ENCODE measurements at regions of chr14 and their contacts with region 1.

Region 1: GRCh38 chr14:76352639-76353281 is 23.2 kb upstream of the ESRRB start:
- DNase-seq: peak; percentile 4
- ATAC-seq: peak; percentile 98
- H3K4me3 ChIP-seq: no peak overlapping the region
- H3K27ac ChIP-seq: no peak overlapping the region
- H3K4me1 ChIP-seq: 0 out of 2 replicates have a peak, but pooled peaks cover 3% of the 10 kb centered on the region
- H3K27me3 ChIP-seq: no peaks in the 10 kb centered on the region
- CTCF ChIP-seq: peak; percentile 71 to 89 (median 86)
- EP300 ChIP-seq: no peak
- POLR2A ChIP-seq: no peak
- RAD21 ChIP-seq: peak; percentile 93

Region 2: DNA sequence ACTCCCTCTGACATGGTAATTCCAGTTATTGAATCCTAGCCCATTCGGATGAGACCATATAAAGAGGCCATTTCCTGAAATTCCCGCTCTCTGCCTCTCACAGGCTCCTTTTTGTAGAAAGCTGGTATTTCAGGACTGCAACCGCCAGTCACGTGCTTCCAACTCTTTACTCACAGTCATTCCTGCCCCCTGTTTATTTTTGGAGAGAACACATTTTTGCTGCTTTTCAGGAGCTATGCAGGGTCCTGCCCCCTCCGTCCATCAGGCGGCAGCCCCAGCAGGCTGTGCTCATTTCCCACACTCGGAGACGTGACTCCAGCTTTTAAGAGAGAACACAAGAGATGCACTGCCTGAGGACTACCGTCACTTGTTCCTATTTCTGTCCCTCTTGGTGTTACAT is 340.4 kb before region 1 on chr14:
- CTCF ChIA-PET with region 1: no interaction called
- POLR2A ChIA-PET with region 1: no interaction called
- RAD21 ChIA-PET with region 1: no interaction called
- SMC1A ChIA-PET with region 1: no interaction called
- in situ Hi-C with region 1: no loop called
- intact Hi-C with region 1: no loop called
- DNase-seq: no peak
- ATAC-seq: no peak
- H3K4me3 ChIP-seq: no peak overlapping the region
- H3K27ac ChIP-seq: no peak overlapping the region
- H3K4me1 ChIP-seq: peaks cover 9% of the 10 kb centered on the region
- H3K27me3 ChIP-seq: no peaks in the 10 kb centered on the region
- CTCF ChIP-seq: no peak
- EP300 ChIP-seq: no peak
- POLR2A ChIP-seq: no peak
- RAD21 ChIP-seq: no peak

Region 3: GRCh38 chr14:76056128-76056527 is 296.6 kb before region 1 on chr14:
- CTCF ChIA-PET with region 1: interaction called, 165 read pairs
- POLR2A ChIA-PET with region 1: no interaction called
- RAD21 ChIA-PET with region 1: interaction called, 41 read pairs
- SMC1A ChIA-PET with region 1: interaction called, 78 read pairs
- in situ Hi-C with region 1: loop called (anchors 10 kb)
- intact Hi-C with region 1: no loop called
- DNase-seq: no peak
- ATAC-seq: no peak
- H3K4me3 ChIP-seq: no peak overlapping the region
- H3K27ac ChIP-seq: no peak overlapping the region
- H3K4me1 ChIP-seq: no peaks in the 10 kb centered on the region; the same call in 1 of the 2 replicates
- H3K27me3 ChIP-seq: no peaks in the 10 kb centered on the region
- CTCF ChIP-seq: peak; percentile 26 to 43 (median 33); a peak in 4 of 6 replicates
- EP300 ChIP-seq: no peak
- POLR2A ChIP-seq: no peak
- RAD21 ChIP-seq: no peak

Region 4: DNA sequence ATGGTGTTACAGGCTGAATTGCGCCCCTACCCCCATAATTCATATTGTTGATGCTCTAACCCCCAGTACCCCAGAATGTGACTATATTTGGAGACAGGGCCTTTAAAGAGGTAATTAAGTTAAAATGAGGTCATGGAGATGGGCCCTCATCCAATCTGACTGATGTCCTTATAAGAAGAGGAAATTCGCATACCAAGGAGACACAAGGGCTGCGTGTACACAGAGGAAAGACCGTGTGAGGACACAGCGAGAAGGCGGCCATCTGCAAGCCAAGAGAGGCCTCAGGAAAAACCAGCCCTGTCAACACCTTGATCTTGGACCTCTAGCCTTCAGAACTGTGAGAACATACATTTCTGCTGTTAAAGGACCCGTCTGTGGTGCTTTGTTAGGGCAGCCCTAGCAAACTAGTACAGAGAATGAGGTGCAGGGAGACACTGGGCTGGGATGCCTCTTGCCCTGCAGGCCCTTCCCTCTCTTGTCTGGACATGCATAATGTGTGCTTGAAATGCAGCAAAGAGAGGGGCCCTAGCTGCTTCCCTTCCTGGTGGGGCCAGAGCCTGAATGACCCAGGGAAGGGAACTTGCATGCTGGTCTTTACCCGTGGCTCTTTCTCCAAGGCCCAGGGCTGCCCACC is 251.3 kb before region 1 on chr14:
- CTCF ChIA-PET with region 1: interaction called, 13 read pairs
- POLR2A ChIA-PET with region 1: no interaction called
- RAD21 ChIA-PET with region 1: interaction called, 4 read pairs
- SMC1A ChIA-PET with region 1: no interaction called
- in situ Hi-C with region 1: no loop called
- intact Hi-C with region 1: no loop called
- DNase-seq: no peak
- ATAC-seq: no peak
- H3K4me3 ChIP-seq: no peak overlapping the region
- H3K27ac ChIP-seq: no peak overlapping the region
- H3K4me1 ChIP-seq: no peaks in the 10 kb centered on the region
- H3K27me3 ChIP-seq: 0 out of 4 replicates have a peak, but pooled peaks cover 0 to 3% of the 10 kb centered on the region in 2 experiments
- CTCF ChIP-seq: no peak
- EP300 ChIP-seq: no peak
- POLR2A ChIP-seq: no peak
- RAD21 ChIP-seq: no peak

Region 5: GRCh38 chr14:76181546-76181945 is 171.2 kb before region 1 on chr14:
- CTCF ChIA-PET with region 1: interaction called, 70 read pairs
- POLR2A ChIA-PET with region 1: interaction called, 8 read pairs
- RAD21 ChIA-PET with region 1: interaction called, 19 read pairs
- SMC1A ChIA-PET with region 1: interaction called, 53 read pairs
- in situ Hi-C with region 1: no loop called
- intact Hi-C with region 1: no loop called
- DNase-seq: no peak
- ATAC-seq: no peak
- H3K4me3 ChIP-seq: no peak overlapping the region
- H3K27ac ChIP-seq: no peak overlapping the region
- H3K4me1 ChIP-seq: peaks cover 17% of the 10 kb centered on the region
- H3K27me3 ChIP-seq: no peaks in the 10 kb centered on the region
- CTCF ChIP-seq: peak; percentile 11 to 25 (median 16); a peak in 1 of 6 replicates
- EP300 ChIP-seq: no peak
- POLR2A ChIP-seq: no peak
- RAD21 ChIP-seq: 0 out of 2 replicates have a peak, but pooled peaks have one; percentile 7

Region 6: GRCh38 chr14:76203086-76204001 is 149.4 kb before region 1 on chr14:
- CTCF ChIA-PET with region 1: interaction called, 10 read pairs
- POLR2A ChIA-PET with region 1: interaction called, 6 read pairs
- RAD21 ChIA-PET with region 1: interaction called, 7 read pairs
- SMC1A ChIA-PET with region 1: interaction called, 17 read pairs
- in situ Hi-C with region 1: no loop called
- intact Hi-C with region 1: loop called (anchors 5 kb)
- DNase-seq: peak; percentile 95
- ATAC-seq: peak; percentile 87
- H3K4me3 ChIP-seq: no peak overlapping the region
- H3K27ac ChIP-seq: peak overlapping the region; percentile 94
- H3K4me1 ChIP-seq: peaks cover 51% of the 10 kb centered on the region
- H3K27me3 ChIP-seq: no peaks in the 10 kb centered on the region
- CTCF ChIP-seq: no peak
- EP300 ChIP-seq: peak; percentile 63 to 71; a peak in 3 of 4 replicates
- POLR2A ChIP-seq: peak; percentile 75
- RAD21 ChIP-seq: peak; percentile 27

Region 7: GRCh38 chr14:76386915-76387782 is 34.4 kb after region 1 on chr14:
- CTCF ChIA-PET with region 1: interaction called, 21 read pairs
- POLR2A ChIA-PET with region 1: no interaction called
- RAD21 ChIA-PET with region 1: interaction called, 3 read pairs
- SMC1A ChIA-PET with region 1: interaction called, 4 read pairs
- in situ Hi-C with region 1: no loop called
- intact Hi-C with region 1: loop called (anchors 2 kb)
- DNase-seq: peak; percentile 7
- ATAC-seq: peak; percentile 99
- H3K4me3 ChIP-seq: no peak overlapping the region
- H3K27ac ChIP-seq: no peak overlapping the region
- H3K4me1 ChIP-seq: no peaks in the 10 kb centered on the region
- H3K27me3 ChIP-seq: no peaks in the 10 kb centered on the region
- CTCF ChIP-seq: peak; percentile 99
- EP300 ChIP-seq: no peak
- POLR2A ChIP-seq: no peak
- RAD21 ChIP-seq: peak; percentile 98

Region 8: DNA sequence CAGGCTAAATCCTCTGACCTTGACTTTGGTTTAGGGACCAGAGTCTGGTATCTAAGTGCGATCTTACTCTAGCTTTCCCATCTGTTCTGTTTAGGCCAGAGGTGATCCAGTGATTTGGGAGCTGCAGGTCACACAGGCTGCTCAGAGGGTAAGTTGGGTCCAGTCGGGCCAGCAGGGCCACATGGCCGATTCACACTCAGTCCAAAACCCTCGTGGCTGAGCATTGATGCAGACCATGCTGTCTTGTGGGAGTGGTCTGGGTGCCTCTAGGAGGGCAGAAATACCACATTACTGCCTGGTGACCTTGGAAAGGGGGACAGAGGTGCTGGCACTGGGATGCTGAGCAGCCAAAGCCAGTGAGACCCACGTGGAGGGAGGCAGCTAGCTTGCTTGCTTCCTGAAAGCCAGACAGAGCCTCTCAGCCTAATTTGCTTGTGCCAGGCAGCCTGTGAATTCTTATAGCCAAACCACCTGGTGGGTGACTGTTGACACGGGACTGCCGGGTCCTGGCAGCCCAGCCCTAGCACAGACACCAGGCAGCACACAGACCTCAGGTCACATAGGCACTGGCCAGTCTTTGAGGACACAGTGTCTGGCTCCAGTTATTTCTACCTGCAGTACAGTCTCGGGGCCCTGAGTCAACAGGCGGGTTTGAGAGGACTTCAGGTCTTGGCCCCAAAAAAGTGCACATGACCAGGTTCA is 54.8 kb after region 1 on chr14:
- CTCF ChIA-PET with region 1: no interaction called
- POLR2A ChIA-PET with region 1: no interaction called
- RAD21 ChIA-PET with region 1: no interaction called
- SMC1A ChIA-PET with region 1: no interaction called
- in situ Hi-C with region 1: no loop called
- intact Hi-C with region 1: no loop called
- DNase-seq: no peak
- ATAC-seq: no peak
- H3K4me3 ChIP-seq: no peak overlapping the region
- H3K27ac ChIP-seq: no peak overlapping the region
- H3K4me1 ChIP-seq: no peaks in the 10 kb centered on the region
- H3K27me3 ChIP-seq: peaks cover 2 to 5% of the 10 kb centered on the region in 2 experiments; a peak in 2 of 4 replicates
- CTCF ChIP-seq: no peak
- EP300 ChIP-seq: no peak
- POLR2A ChIP-seq: no peak
- RAD21 ChIP-seq: no peak

Region 9: GRCh38 chr14:76426161-76426696 is 73.5 kb after region 1 on chr14:
- CTCF ChIA-PET with region 1: no interaction called
- POLR2A ChIA-PET with region 1: no interaction called
- RAD21 ChIA-PET with region 1: no interaction called
- SMC1A ChIA-PET with region 1: no interaction called
- in situ Hi-C with region 1: no loop called
- intact Hi-C with region 1: no loop called
- DNase-seq: no peak
- ATAC-seq: peak; percentile 42; the same call in 1 of the 3 replicates
- H3K4me3 ChIP-seq: no peak overlapping the region
- H3K27ac ChIP-seq: no peak overlapping the region
- H3K4me1 ChIP-seq: no peaks in the 10 kb centered on the region
- H3K27me3 ChIP-seq: no peaks in the 10 kb centered on the region; a peak in 1 of 4 replicates
- CTCF ChIP-seq: no peak
- EP300 ChIP-seq: no peak
- POLR2A ChIP-seq: no peak
- RAD21 ChIP-seq: no peak

Measured in GM12878 (cell line).